GM10248 (cell line): ENCODE measurements at regions of chr10 and their contacts with region 1.

Region 1: GRCh38 chr10:30433730-30434272 is at the start of gene MAP3K8:
- DNase-seq: peak; percentile 90
- CTCF ChIP-seq: no peak

Region 2: DNA sequence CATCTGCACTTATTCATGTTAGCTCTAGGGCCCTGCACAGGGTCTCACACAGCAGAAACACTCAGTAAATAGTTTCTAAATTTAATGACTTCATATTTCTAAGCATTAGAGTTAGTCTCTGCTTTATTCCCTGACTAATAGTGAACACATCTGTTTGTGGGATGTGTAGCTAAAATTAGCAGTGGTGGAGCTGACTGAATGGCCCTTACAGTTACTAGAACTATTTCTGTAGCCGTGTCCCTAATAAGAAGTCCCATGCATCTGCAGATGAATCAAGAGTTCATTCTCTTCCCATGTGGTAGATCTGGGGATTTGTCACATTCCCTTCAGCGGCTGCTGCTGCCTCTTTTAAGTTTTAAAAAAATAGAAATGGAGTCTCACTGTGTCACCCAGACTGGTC is 11.9 kb after region 1 on chr10:
- CTCF ChIA-PET with region 1: interaction called, 8 read pairs
- POLR2A ChIA-PET with region 1: interaction called, 11 read pairs
- DNase-seq: no peak
- CTCF ChIP-seq: no peak

Region 3: GRCh38 chr10:30625080-30625479 is 191.3 kb after region 1 on chr10:
- CTCF ChIA-PET with region 1: no interaction called
- POLR2A ChIA-PET with region 1: no interaction called
- DNase-seq: no peak
- CTCF ChIP-seq: no peak